Gastrocnemius medialis (tissue), 4 donors: ENCODE measurements at regions of chr1 and their contacts with region 1.

Region 1: GRCh38 chr1:71049951-71050598 is 2.5 kb upstream of the PTGER3 start:
- DNase-seq: no peak
- ATAC-seq: peak; percentile 60 to 67
- H3K4me3 ChIP-seq: no peak overlapping the region
- H3K27ac ChIP-seq: no peak overlapping the region
- H3K4me1 ChIP-seq: peaks cover 6 to 12% of the 10 kb centered on the region in 2 donors
- H3K27me3 ChIP-seq: peaks cover 28 to 39% (median 33%) of the 10 kb centered on the region in 3 donors
- CTCF ChIP-seq: peak; percentile 29 to 65 (median 57)
- POLR2A ChIP-seq: no peak

Region 2: GRCh38 chr1:70227439-70227838 is 822.6 kb before region 1 on chr1:
- in situ Hi-C with region 1: loop called in 2 of 4 experiments (anchors 25 kb)
- intact Hi-C with region 1: no loop called
- DNase-seq: no peak
- ATAC-seq: no peak
- H3K4me3 ChIP-seq: no peak overlapping the region
- H3K27ac ChIP-seq: no peak overlapping the region
- H3K4me1 ChIP-seq: peaks cover 46 to 57% of the 10 kb centered on the region in 2 donors
- H3K27me3 ChIP-seq: no peaks in the 10 kb centered on the region
- CTCF ChIP-seq: no peak
- POLR2A ChIP-seq: no peak

Region 3: DNA sequence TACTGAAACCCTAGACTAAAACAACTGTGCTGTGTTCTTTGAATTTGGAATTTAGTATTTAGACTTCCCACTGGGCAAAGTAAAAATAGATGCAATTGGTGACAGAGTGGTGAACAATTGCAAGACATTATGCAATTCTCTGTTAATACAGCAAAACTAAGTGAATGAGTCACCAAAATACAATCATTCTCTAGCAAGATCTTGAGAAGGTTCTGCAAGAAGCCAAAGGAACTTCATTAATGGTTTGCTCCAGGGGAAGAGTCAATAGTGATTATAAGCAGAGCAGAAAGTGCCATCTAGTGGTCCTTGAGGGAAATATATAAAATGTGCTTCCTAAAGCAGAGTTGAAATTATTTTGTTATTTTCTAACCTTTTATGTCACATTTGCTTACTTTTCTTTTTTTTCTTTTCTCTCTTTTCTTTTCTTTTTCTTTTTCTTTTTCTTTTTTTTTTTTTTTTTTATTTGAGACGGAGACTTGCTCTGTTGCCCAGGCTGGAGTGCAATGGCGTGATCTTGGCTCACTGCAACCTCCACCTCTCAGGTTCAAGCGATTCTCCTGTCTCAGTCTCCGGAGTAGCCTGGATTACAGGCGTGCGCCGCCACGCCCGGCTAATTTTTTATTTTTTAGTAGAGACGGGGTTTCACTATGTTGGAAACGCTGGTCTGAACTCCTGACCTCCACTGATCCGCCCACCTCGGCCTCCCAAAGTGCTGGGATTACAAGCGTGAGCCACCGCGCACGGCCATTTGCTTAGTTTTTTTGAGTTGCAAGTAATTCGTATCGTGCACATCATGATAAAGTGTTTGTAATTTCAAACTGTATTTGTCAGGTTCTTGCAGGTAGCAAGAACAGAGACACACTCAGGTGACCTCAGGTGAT is 539.8 kb before region 1 on chr1:
- in situ Hi-C with region 1: loop called in 1 of 4 experiments (anchors 25 kb)
- intact Hi-C with region 1: no loop called
- DNase-seq: no peak
- ATAC-seq: peak; percentile 78 to 79
- H3K4me3 ChIP-seq: no peak overlapping the region
- H3K27ac ChIP-seq: no peak overlapping the region
- H3K4me1 ChIP-seq: no peaks in the 10 kb centered on the region
- H3K27me3 ChIP-seq: no peaks in the 10 kb centered on the region
- CTCF ChIP-seq: peak in 4 of 5 experiments; percentile 45 to 63 (median 57)
- POLR2A ChIP-seq: no peak

Region 4: DNA sequence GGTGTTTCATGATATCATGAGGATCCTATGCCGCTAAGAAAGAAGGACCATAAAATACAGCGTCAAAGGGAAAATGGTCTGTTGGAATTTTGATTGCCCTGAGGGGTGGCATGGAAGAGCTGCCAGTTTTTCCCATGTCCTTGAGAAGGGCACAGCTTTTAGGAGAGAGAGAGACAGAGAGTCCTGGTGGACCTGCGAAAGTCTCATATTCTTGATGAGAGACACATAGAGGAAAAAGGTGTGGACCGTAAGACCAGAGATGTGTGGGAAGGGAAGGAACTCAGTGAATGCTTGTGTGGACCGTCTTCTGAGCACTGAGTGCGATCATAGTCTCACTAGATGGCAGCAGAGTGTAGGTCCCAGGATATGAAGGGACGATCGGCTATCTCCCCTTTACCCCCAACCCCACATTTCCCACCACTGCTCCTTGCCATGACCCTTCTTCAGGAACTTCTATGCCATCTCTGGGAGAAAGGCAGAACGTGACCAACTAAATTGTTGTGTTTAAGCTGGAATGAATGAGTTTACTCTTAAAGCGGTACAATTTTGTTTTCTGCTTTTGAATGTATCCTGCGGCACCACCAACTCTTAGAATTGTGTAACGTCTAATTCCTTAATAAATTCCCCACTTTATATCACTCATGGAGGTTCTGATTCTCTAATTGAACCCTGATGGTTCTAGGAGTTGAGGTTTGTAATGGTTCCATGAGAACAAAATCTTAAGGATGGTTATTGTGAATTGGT is 521.3 kb before region 1 on chr1:
- in situ Hi-C with region 1: loop called (anchors 10 to 25 kb)
- intact Hi-C with region 1: loop called (anchors 2 kb)
- DNase-seq: no peak
- ATAC-seq: no peak
- H3K4me3 ChIP-seq: no peak overlapping the region
- H3K27ac ChIP-seq: no peak overlapping the region
- H3K4me1 ChIP-seq: no peaks in the 10 kb centered on the region
- H3K27me3 ChIP-seq: no peaks in the 10 kb centered on the region
- CTCF ChIP-seq: peak in 2 of 5 experiments; percentile 30 to 52
- POLR2A ChIP-seq: no peak

Region 5: DNA sequence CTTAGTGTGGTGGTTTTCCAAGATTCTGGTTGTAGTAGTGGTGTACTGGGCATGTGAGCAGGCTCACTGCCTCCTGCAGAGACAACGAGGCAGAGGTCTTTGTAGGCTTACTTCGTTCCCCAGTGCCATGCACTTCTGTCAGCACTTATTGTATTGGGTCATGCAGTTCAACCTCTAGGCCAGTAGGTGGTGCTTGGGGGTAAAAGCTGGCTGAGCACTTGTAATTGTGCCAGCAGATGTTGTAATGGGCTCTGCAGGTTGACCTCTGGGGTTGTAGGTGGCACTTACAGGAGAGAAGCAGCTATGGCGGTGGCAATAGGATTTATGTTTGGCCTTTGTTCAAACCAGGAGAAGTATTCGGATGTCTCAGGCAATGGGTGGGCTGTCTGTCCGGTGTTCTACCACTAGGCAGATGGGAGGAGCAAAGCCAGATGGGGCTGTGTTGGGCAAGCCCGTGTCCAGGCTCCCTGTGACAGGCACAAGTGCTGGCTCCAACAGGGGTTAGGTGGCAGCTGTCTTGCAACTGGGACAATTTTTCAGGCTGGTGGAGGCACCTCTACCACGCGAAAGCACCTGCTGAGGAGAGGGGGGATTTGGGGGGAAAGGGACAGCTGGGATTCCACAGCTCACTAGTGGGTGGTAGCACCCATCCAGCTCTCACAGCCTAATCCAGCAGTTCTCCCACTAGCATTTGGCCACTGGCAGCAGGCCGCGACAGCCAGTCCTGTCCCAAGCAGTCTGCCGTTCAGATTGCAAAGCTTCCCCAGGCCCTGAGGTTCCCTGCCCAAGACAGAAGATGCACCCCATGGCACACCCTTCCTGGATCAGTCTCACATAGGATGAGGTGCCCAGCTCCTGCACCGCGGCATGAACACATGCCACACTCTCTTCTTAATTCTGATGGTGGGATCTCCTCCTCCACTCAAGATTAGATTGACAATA is 364.5 kb before region 1 on chr1:
- in situ Hi-C with region 1: loop called in 3 of 4 experiments (anchors 5 to 25 kb)
- intact Hi-C with region 1: loop called (anchors 5 kb)
- DNase-seq: peak in 1 of 2 donors; percentile 28
- ATAC-seq: peak in 1 of 2 donors; percentile 56
- H3K4me3 ChIP-seq: no peak overlapping the region
- H3K27ac ChIP-seq: no peak overlapping the region
- H3K4me1 ChIP-seq: no peaks in the 10 kb centered on the region
- H3K27me3 ChIP-seq: no peaks in the 10 kb centered on the region
- CTCF ChIP-seq: peak in 4 of 5 experiments; percentile 37 to 57 (median 52)
- POLR2A ChIP-seq: no peak

Region 6: GRCh38 chr1:70978623-70979022 is 71.5 kb before region 1 on chr1:
- in situ Hi-C with region 1: no loop called
- intact Hi-C with region 1: no loop called
- DNase-seq: no peak
- ATAC-seq: no peak
- H3K4me3 ChIP-seq: no peak overlapping the region
- H3K27ac ChIP-seq: no peak overlapping the region
- H3K4me1 ChIP-seq: no peaks in the 10 kb centered on the region
- H3K27me3 ChIP-seq: no peaks in the 10 kb centered on the region
- CTCF ChIP-seq: no peak
- POLR2A ChIP-seq: no peak

Region 7: GRCh38 chr1:71745326-71745725 is 695.3 kb after region 1 on chr1:
- in situ Hi-C with region 1: no loop called
- intact Hi-C with region 1: no loop called
- DNase-seq: no peak
- ATAC-seq: no peak
- H3K4me3 ChIP-seq: no peak overlapping the region
- H3K27ac ChIP-seq: no peak overlapping the region
- H3K4me1 ChIP-seq: no peaks in the 10 kb centered on the region
- H3K27me3 ChIP-seq: no peaks in the 10 kb centered on the region
- CTCF ChIP-seq: no peak
- POLR2A ChIP-seq: no peak

Region 8: GRCh38 chr1:72271555-72272085 is 1221.5 kb after region 1 on chr1:
- in situ Hi-C with region 1: no loop called
- intact Hi-C with region 1: no loop called
- DNase-seq: no peak
- ATAC-seq: no peak
- H3K4me3 ChIP-seq: no peak overlapping the region
- H3K27ac ChIP-seq: no peak overlapping the region
- H3K4me1 ChIP-seq: no peaks in the 10 kb centered on the region
- H3K27me3 ChIP-seq: no peaks in the 10 kb centered on the region
- CTCF ChIP-seq: no peak
- POLR2A ChIP-seq: no peak